Activated CD4-positive, alpha-beta T cell treated with anti-CD3 and anti-CD28 coated beads, Interleukin-2, amount 10 ng/mL, durations not matched to agents 24 days and 14 days (primary cell): ENCODE measurements at regions of chr3 and their contacts with region 1.

Region 1: GRCh38 chr3:58532794-58533220 is 4.2 kb downstream of the ACOX2 start:
- DNase-seq: peak; percentile 94
- H3K4me3 Mint-ChIP-seq: no peak overlapping the region
- H3K27ac Mint-ChIP-seq: peak overlapping the region; percentile 54
- H3K4me1 Mint-ChIP-seq: peaks cover 16% of the 10 kb centered on the region
- H3K27me3 Mint-ChIP-seq: peaks cover 7% of the 10 kb centered on the region

Region 2: GRCh38 chr3:58237238-58237940 is 295.4 kb before region 1 on chr3 and contains the start of gene ABHD6:
- intact Hi-C with region 1: loop called (anchors 5 kb)
- DNase-seq: peak; percentile 95
- H3K4me3 Mint-ChIP-seq: peak within 1 kb of the TSS; percentile 94
- H3K27ac Mint-ChIP-seq: peak within 1 kb of the TSS; percentile 83
- H3K4me1 Mint-ChIP-seq: peaks cover 15% of the 10 kb centered on the region
- H3K27me3 Mint-ChIP-seq: peaks cover 27% of the 10 kb centered on the region
- total RNA-seq, gene ABHD6: 9.8 and 10.8 TPM in 2 replicates

Region 3: GRCh38 chr3:58414538-58415197 is 118.1 kb before region 1 on chr3:
- intact Hi-C with region 1: loop called (anchors 1 kb)
- DNase-seq: peak; percentile 89
- H3K4me3 Mint-ChIP-seq: no peak overlapping the region
- H3K27ac Mint-ChIP-seq: no peak overlapping the region
- H3K4me1 Mint-ChIP-seq: peaks cover 5% of the 10 kb centered on the region
- H3K27me3 Mint-ChIP-seq: no peaks in the 10 kb centered on the region

Region 4: GRCh38 chr3:58463181-58463941 is 69.4 kb before region 1 on chr3:
- intact Hi-C with region 1: loop called (anchors 1 kb)
- DNase-seq: peak; percentile 90
- H3K4me3 Mint-ChIP-seq: no peak overlapping the region
- H3K27ac Mint-ChIP-seq: peak overlapping the region; percentile 65
- H3K4me1 Mint-ChIP-seq: peaks cover 11% of the 10 kb centered on the region
- H3K27me3 Mint-ChIP-seq: peaks cover 6% of the 10 kb centered on the region

Region 5: GRCh38 chr3:58497097-58497496 is 35.7 kb before region 1 on chr3:
- intact Hi-C with region 1: no loop called
- DNase-seq: no peak
- H3K4me3 Mint-ChIP-seq: no peak overlapping the region
- H3K27ac Mint-ChIP-seq: no peak overlapping the region
- H3K4me1 Mint-ChIP-seq: peaks cover 20% of the 10 kb centered on the region
- H3K27me3 Mint-ChIP-seq: peaks cover 9% of the 10 kb centered on the region